KBM-7 (cell line): ENCODE measurements at regions of chr10 and their contacts with region 1.

Region 1: DNA sequence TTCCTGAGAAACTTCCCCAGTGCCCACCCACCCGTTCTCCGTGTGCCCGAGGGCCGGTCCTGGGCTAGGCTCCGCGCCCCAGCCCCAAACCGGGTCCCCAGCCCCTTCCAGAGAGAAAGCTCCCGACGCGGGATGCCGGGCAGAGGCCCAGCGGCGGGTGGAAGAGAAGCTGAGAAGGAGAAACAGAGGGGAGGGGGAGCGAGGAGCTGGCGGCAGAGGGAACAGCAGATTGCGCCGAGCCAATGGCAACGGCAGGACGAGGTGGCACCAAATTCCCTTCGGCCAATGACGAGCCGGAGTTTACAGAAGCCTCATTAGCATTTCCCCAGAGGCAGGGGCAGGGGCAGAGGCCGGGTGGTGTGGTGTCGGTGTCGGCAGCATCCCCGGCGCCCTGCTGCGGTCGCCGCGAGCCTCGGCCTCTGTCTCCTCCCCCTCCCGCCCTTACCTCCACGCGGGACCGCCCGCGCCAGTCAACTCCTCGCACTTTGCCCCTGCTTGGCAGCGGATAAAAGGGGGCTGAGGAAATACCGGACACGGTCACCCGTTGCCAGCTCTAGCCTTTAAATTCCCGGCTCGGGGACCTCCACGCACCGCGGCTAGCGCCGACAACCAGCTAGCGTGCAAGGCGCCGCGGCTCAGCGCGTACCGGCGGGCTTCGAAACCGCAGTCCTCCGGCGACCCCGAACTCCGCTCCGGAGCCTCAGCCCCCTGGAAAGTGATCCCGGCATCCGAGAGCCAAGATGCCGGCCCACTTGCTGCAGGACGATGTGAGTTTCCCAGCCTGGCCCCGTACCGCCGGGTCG is at the start of gene SCD:
- DNase-seq: peak; percentile 96

Region 2: GRCh38 chr10:100038561-100039071 is 308.4 kb before region 1 on chr10:
- in situ Hi-C with region 1: no loop called
- DNase-seq: no peak

Region 3: GRCh38 chr10:100419911-100420449 is 73.0 kb after region 1 on chr10:
- in situ Hi-C with region 1: loop called (anchors 10 kb)
- DNase-seq: peak; percentile 52

Region 4: GRCh38 chr10:100518761-100519241 is 171.8 kb after region 1 on chr10:
- in situ Hi-C with region 1: loop called (anchors 25 kb)
- DNase-seq: peak; percentile 76